ENCODE measurements at regions of chr13 and their contacts with region 1.

Region 1: DNA sequence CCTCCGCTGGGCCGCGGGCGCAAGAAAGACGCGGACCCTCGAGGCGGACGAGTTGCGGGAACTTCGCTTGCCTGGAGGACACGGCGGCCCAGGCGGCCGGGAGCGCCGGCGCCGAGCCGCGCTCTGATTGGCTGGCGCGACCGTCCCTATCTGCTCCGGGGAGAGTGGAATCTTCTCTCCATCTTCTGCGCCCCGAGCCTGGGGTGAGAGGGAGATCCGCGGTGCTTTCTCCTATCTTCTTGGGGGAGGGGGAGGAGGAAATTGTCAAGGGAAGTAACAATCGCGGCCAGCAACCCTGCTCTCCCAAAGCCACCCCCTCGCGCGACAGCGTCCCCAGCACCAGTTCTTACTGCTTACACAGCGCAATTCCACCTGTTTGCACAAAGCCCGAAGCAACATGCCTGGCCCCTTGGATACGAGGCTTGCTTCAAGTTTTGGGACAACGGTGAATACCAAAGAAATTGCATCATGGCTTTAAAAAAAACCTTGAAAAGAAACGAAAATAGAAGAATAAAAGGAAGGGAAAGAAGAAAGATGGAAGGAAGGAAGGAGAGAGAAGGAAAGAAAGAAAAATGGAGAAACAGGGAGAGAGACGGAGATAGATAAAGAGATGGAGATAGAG is 4.8 kb downstream of the SOX21 start:
- DNase-seq: no peak
- ATAC-seq: no peak
- H3K4me3 ChIP-seq: no peak overlapping the region
- H3K4me3 Mint-ChIP-seq: peak overlapping the region; percentile 20 to 72 (median 61)
- H3K27ac ChIP-seq: no peak overlapping the region
- H3K27ac Mint-ChIP-seq: peak overlapping the region in 1 of 9 donors; percentile 47
- H3K4me1 ChIP-seq: no peaks in the 10 kb centered on the region
- H3K4me1 Mint-ChIP-seq: peaks cover 10 to 47% (median 31%) of the 10 kb centered on the region in 7 donors
- H3K27me3 ChIP-seq: peaks cover 4 to 47% of the 10 kb centered on the region in 2 donors
- H3K27me3 Mint-ChIP-seq: peaks cover 78 to 89% (median 84%) of the 10 kb centered on the region in 5 donors

Region 2: GRCh38 chr13:93227878-93228642 is 1479.5 kb before region 1 on chr13:
- CTCF ChIA-PET with region 1: no interaction called
- POLR2A ChIA-PET with region 1: no interaction called
- intact Hi-C with region 1: loop called in 1 of 2 experiments (anchors 10 kb)
- DNase-seq: no peak
- ATAC-seq: no peak
- H3K4me3 ChIP-seq: no peak overlapping the region
- H3K4me3 Mint-ChIP-seq: no peak overlapping the region
- H3K27ac ChIP-seq: no peak overlapping the region
- H3K27ac Mint-ChIP-seq: peak overlapping the region in 1 of 9 donors; percentile 67
- H3K4me1 ChIP-seq: no peaks in the 10 kb centered on the region
- H3K4me1 Mint-ChIP-seq: peaks cover 0 to 16% (median 0%) of the 10 kb centered on the region in 7 donors
- H3K27me3 ChIP-seq: peaks cover 0 to 4% of the 10 kb centered on the region in 2 donors
- H3K27me3 Mint-ChIP-seq: peaks cover 36 to 66% (median 57%) of the 10 kb centered on the region in 5 donors

Region 3: GRCh38 chr13:94520001-94520400 is 187.5 kb before region 1 on chr13:
- CTCF ChIA-PET with region 1: no interaction called
- POLR2A ChIA-PET with region 1: no interaction called
- intact Hi-C with region 1: no loop called
- DNase-seq: no peak
- ATAC-seq: no peak
- H3K4me3 ChIP-seq: no peak overlapping the region
- H3K4me3 Mint-ChIP-seq: no peak overlapping the region
- H3K27ac ChIP-seq: no peak overlapping the region
- H3K27ac Mint-ChIP-seq: no peak overlapping the region
- H3K4me1 ChIP-seq: no peaks in the 10 kb centered on the region
- H3K4me1 Mint-ChIP-seq: peaks cover 0 to 9% (median 2%) of the 10 kb centered on the region in 7 donors
- H3K27me3 ChIP-seq: no peaks in the 10 kb centered on the region
- H3K27me3 Mint-ChIP-seq: peaks cover 0 to 5% (median 0%) of the 10 kb centered on the region in 5 donors

Region 4: GRCh38 chr13:94739235-94739634 is 31.7 kb after region 1 on chr13:
- CTCF ChIA-PET with region 1: no interaction called
- POLR2A ChIA-PET with region 1: no interaction called
- intact Hi-C with region 1: no loop called
- DNase-seq: no peak
- ATAC-seq: no peak
- H3K4me3 ChIP-seq: no peak overlapping the region
- H3K4me3 Mint-ChIP-seq: no peak overlapping the region
- H3K27ac ChIP-seq: no peak overlapping the region
- H3K27ac Mint-ChIP-seq: no peak overlapping the region
- H3K4me1 ChIP-seq: no peaks in the 10 kb centered on the region
- H3K4me1 Mint-ChIP-seq: peaks cover 0 to 1% (median 0%) of the 10 kb centered on the region in 7 donors
- H3K27me3 ChIP-seq: no peaks in the 10 kb centered on the region
- H3K27me3 Mint-ChIP-seq: peaks cover 0 to 26% (median 22%) of the 10 kb centered on the region in 5 donors

Region 5: DNA sequence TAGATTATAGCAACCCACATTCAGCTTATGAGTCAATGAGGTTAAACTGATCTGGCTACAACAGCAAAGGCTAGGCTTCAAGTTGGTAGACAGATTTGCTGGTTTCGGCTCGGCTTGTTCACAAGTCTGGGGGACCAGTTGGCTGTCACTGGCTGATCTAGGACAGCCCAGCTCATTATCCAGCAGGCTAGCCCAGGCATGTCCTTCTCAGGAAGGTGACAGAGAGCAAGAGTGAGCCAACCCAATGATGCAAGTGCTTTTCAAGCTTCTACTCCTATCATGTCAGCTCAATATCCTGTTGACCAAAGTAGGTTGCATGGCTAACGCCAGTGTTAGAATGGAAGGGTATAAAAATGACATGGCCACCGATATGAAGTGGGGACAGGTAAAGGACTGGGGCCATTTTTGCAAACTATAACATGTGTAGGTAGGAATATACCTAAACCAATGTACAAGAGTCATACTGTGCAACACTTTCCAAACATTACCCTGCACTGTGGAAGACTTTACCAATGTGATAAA is 225.8 kb after region 1 on chr13:
- CTCF ChIA-PET with region 1: no interaction called
- POLR2A ChIA-PET with region 1: no interaction called
- intact Hi-C with region 1: no loop called
- DNase-seq: no peak
- ATAC-seq: no peak
- H3K4me3 ChIP-seq: no peak overlapping the region
- H3K4me3 Mint-ChIP-seq: no peak overlapping the region
- H3K27ac ChIP-seq: no peak overlapping the region
- H3K27ac Mint-ChIP-seq: no peak overlapping the region
- H3K4me1 ChIP-seq: no peaks in the 10 kb centered on the region
- H3K4me1 Mint-ChIP-seq: no peaks in the 10 kb centered on the region
- H3K27me3 ChIP-seq: no peaks in the 10 kb centered on the region
- H3K27me3 Mint-ChIP-seq: peaks cover 1 to 16% (median 15%) of the 10 kb centered on the region in 5 donors

Region 6: DNA sequence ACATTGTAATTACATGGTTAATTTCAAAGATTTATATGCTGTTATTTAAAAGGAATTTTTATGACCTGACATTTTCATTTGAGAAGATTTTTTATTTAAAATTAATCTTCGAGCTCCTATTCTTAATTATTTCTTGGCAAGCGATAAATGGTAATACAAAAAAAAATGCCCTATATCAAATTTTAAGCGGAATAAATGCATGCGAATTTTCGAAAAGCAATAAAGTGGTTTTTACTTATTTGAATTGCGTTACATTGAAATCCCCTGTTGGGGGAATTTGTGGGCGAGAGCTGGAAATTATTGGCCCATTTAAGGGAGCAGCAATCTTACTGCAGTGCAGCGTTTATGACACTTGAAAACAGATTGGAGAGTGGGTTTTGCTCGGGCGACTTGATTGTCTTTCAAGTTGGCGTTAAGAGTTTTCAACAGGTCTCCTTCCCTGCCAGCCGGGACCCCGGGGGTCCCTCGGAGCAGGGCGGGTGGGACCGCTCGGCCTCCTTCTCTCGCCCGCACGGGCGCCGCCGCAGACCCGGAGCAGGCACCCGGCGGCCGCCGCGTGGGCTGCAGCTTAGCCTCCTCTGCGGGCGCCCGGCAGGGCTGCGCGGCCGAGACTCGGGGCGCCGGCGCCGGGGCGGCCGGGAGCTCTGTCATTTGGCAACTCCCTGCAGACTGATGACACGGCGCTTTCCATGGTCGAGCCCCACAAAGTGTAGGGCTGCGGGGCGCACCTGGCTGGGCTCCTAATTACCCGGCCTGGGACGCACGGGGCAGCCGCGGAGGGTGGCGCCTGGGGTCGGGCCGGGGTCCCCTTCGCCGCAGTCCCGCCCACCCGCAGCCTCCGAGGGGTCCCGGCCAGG is 259.9 kb after region 1 on chr13:
- CTCF ChIA-PET with region 1: no interaction called
- POLR2A ChIA-PET with region 1: no interaction called
- intact Hi-C with region 1: loop called in 1 of 2 experiments (anchors 5 kb)
- DNase-seq: peak in 1 of 9 donors; percentile 35
- ATAC-seq: peak; percentile 29
- H3K4me3 ChIP-seq: no peak overlapping the region
- H3K4me3 Mint-ChIP-seq: peak overlapping the region in 8 of 10 donors; percentile 41 to 72 (median 65)
- H3K27ac ChIP-seq: no peak overlapping the region
- H3K27ac Mint-ChIP-seq: no peak overlapping the region
- H3K4me1 ChIP-seq: no peaks in the 10 kb centered on the region
- H3K4me1 Mint-ChIP-seq: peaks cover 0 to 17% (median 13%) of the 10 kb centered on the region in 7 donors
- H3K27me3 ChIP-seq: peaks cover 3 to 6% of the 10 kb centered on the region in 2 donors
- H3K27me3 Mint-ChIP-seq: peaks cover 56 to 81% (median 65%) of the 10 kb centered on the region in 5 donors